ENCODE measurements at regions of chr13 and their contacts with region 1.

Region 1: DNA sequence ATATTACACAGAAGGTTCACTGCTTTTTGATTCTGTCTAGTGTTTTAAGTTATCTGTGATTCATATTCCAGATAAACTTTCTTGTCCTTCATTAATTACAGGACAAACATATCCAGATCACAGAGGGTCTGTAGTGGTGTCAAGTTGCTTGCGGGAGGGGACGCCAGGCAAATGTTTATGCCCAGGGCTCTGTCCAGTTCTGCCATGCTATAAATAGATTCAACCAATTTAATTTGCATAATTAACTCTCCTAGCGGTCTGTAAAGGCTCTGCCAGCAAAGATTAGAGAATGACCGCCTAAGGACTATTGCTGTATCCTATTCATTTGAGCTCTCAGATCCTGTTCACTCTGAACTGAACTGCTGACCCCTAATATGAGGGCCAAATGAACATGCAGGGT is 59.7 kb upstream of the TRPC4 start:
- DNase-seq: no peak
- H3K4me3 ChIP-seq: no peak overlapping the region
- H3K27ac ChIP-seq: no peak overlapping the region
- H3K4me1 ChIP-seq: no peaks in the 10 kb centered on the region
- H3K27me3 ChIP-seq: no peaks in the 10 kb centered on the region
- CTCF ChIP-seq: no peak

Region 2: GRCh38 chr13:37914781-37915391 is 14.4 kb before region 1 on chr13:
- CTCF ChIA-PET with region 1: interaction called, 13 read pairs
- POLR2A ChIA-PET with region 1: no interaction called
- intact Hi-C with region 1: no loop called
- DNase-seq: peak; percentile 93
- H3K4me3 ChIP-seq: no peak overlapping the region
- H3K27ac ChIP-seq: peak overlapping the region; percentile 28
- H3K4me1 ChIP-seq: peaks cover 19% of the 10 kb centered on the region
- H3K27me3 ChIP-seq: no peaks in the 10 kb centered on the region
- CTCF ChIP-seq: no peak